MCF 10A (cell line): ENCODE measurements at regions of chr17 and their contacts with region 1.

Region 1: GRCh38 chr17:77365584-77366186 is 224.9 kb downstream of the SEC14L1 start:
- DNase-seq: peak; percentile 77
- H3K4me3 Mint-ChIP-seq: peak overlapping the region; percentile 54
- H3K27ac Mint-ChIP-seq: peak overlapping the region; percentile 97
- H3K4me1 Mint-ChIP-seq: peaks cover 52% of the 10 kb centered on the region
- H3K27me3 Mint-ChIP-seq: no peaks in the 10 kb centered on the region
- CTCF ChIP-seq: no peak

Region 2: DNA sequence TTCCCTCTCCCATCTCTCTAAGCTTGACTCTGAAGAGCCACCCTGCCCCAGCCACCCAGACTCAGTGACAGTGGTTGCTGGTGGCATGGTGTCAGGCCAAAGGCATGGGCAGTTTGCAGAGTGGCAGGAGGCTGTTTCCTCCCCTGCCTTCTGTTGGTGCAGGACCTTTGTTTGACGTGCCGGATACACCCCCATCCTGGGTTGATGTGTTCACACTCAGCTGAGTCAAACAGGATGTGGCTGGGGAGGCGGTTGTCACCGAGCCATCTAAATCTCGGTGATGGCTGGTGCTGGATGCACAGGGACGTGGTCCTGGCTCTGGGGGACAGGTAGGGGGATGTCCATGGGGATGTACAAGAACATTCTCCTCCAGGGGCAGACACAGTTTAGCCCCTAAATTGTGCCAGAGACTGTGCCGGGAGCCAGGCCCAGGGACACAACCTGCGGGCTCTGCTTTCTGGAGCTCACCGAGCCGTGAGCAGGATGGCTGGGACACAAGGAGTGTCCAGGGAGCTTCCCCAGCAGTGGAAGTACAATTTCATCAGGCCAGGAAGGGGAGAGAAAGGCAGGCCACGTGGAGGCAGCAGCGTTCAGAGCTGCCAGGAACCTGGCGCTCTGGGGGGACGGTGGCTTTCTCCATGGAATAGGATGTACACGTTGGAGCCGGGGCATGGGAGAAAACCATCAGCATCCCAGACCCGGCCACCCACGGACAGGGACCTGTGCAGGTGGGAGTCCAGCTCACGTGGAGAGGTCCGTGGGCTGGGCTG is 39.3 kb after region 1 on chr17:
- CTCF ChIA-PET with region 1: no interaction called
- POLR2A ChIA-PET with region 1: no interaction called
- intact Hi-C with region 1: loop called (anchors 5 kb)
- DNase-seq: peak; percentile 66
- H3K4me3 Mint-ChIP-seq: no peak overlapping the region
- H3K27ac Mint-ChIP-seq: peak overlapping the region; percentile 61
- H3K4me1 Mint-ChIP-seq: peaks cover 56% of the 10 kb centered on the region
- H3K27me3 Mint-ChIP-seq: no peaks in the 10 kb centered on the region
- CTCF ChIP-seq: no peak

Region 3: GRCh38 chr17:77507111-77507885 is 141.6 kb after region 1 on chr17:
- CTCF ChIA-PET with region 1: no interaction called
- POLR2A ChIA-PET with region 1: no interaction called
- intact Hi-C with region 1: no loop called
- DNase-seq: no peak
- H3K4me3 Mint-ChIP-seq: no peak overlapping the region
- H3K27ac Mint-ChIP-seq: no peak overlapping the region
- H3K4me1 Mint-ChIP-seq: no peaks in the 10 kb centered on the region
- H3K27me3 Mint-ChIP-seq: no peaks in the 10 kb centered on the region
- CTCF ChIP-seq: no peak